Activated CD4-positive, alpha-beta memory T cell treated with anti-CD3 and anti-CD28 coated beads for 36 hours (primary cell): ENCODE measurements at regions of chr4 and their contacts with region 1.

Region 1: DNA sequence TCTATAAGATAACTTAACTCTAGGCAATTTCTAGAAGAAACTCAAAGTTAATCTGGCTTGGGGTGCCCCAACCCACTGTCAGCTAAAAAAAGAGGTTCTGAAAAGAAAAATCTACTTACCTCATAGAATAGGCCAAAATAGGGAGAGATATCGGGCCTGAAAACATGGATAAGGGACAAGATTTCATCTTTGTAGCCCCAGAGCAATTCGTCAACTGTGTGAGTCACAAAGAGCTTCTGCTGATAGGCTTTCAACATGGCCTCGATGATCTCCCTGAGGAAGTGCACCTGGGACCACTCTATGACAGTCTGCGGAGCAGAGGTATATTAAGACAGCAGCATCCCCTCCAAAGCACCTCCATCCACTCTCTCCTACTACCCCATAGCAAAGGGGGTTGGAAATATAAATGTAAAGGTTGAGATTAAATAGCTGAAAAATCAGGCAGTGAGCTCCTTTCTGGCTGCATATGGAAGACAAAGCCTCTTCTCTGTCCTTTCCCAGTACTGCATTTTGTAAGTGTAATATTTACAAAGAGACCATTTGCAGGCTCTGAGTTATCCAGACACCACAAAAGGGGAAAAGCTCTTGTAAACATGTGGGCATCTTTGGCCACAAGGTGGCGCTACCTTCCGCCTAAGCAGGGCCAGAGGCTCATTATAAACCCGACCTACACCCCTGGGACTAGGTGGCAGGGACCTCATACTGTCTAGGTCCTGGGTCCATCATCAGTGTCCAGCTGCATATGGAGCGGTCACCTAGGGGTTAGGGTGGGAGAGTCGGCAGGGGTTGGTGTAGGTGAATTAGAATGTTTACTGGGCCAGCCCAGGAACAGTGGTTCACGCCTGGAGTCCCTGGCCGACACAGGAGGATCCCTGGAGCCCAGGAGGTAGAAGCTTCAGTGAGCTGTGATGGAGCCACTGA is 31.5 kb upstream of the NUP54 start:
- DNase-seq: peak; percentile 87
- H3K4me3 Mint-ChIP-seq: no peak overlapping the region
- H3K27ac Mint-ChIP-seq: no peak overlapping the region
- H3K4me1 Mint-ChIP-seq: no peaks in the 10 kb centered on the region
- H3K27me3 Mint-ChIP-seq: no peaks in the 10 kb centered on the region

Region 2: GRCh38 chr4:76148142-76148865 is 31.4 kb before region 1 on chr4 and contains the start of gene NUP54:
- CTCF ChIA-PET with region 1: interaction called, 11 read pairs
- POLR2A ChIA-PET with region 1: no interaction called
- intact Hi-C with region 1: no loop called
- DNase-seq: peak; percentile 98
- H3K4me3 Mint-ChIP-seq: peak within 1 kb of the TSS; percentile 91
- H3K27ac Mint-ChIP-seq: peak within 1 kb of the TSS; percentile 88
- H3K4me1 Mint-ChIP-seq: peaks cover 25% of the 10 kb centered on the region
- H3K27me3 Mint-ChIP-seq: no peaks in the 10 kb centered on the region
- total RNA-seq, gene NUP54: 51.3 to 55.9 TPM

Region 3: DNA sequence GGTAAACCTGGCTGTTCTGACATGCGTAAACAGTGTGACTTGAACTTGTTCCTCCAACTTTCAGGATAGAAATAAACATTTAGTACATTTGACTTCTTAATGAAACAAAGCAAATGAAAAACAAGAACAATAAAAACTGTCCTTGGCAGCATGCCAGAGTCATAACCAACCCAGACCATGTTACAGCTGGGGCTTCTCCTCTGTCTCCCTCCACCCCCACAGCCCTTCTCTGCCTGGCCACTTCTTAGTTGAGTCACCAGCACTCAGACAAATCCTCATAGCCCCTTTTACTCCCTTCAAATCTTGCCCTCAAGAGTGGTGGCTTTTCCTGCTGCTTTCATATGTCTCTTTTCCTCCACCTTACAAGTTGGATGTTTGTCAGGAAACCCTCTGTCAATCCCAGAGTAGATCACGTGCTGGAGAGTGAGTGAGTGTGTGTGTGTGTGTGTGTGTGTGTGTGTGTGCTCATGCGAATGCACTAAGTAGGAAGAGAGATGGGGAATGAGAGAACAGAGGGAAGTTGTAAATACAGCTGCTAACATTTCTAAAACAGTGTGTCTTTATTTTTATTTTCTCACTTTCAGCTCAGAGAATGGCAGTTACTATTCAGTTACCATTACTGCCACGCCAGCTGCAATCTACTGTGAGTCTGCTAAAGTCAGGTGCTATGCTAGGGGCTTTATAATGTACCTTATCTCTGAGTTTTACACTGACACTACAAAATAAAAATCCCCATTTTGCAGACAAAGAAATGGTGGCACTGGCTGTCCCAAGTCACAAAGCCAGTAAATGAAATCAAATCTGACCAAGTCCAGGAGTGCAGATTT is 19.0 kb after region 1 on chr4:
- CTCF ChIA-PET with region 1: interaction called, 16 read pairs
- POLR2A ChIA-PET with region 1: no interaction called
- intact Hi-C with region 1: no loop called
- DNase-seq: peak; percentile 73
- H3K4me3 Mint-ChIP-seq: no peak overlapping the region
- H3K27ac Mint-ChIP-seq: peak overlapping the region; percentile 20
- H3K4me1 Mint-ChIP-seq: peaks cover 44% of the 10 kb centered on the region
- H3K27me3 Mint-ChIP-seq: no peaks in the 10 kb centered on the region

Region 4: DNA sequence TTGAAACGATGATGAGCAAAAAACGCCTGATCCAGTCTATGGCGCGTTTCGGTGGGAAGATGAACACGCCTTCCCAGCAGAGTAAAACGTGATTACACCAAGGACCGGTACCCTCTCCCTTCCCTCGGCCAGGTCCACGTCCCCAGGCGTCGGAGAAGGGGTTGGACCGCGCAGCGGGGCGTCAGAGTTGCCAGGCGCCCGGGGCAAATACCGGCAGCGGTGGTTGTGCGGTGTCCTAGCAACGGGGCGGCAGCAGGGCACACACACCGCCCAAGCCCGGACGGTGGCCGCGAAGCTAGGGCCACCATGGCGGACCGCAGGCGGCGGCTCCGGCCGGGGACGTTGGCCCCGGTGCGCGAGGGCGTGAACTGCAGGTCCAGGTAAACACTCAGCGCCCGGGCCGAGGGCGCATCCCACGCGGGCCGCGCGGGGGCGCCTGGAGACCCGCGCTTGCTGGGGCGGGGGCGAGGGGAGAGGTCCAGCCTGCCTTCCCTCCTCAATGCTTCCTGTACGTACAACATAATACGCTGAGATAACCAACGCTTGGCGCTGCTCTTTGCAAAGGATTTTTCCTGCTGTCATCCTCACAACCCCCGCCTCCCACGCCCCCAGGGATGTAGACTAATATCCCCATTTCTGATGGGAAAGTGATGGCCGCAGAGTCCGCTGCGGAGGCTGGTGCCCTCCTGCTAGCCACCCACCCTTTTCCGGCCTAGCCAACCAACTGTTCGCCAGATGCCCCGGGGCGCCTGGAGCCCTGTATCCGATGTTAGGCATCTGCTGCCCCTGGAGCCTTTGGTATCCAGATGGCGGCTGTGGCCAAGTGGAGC is 72.0 kb after region 1 on chr4 and contains the start of gene FAM47E:
- CTCF ChIA-PET with region 1: interaction called, 5 read pairs
- POLR2A ChIA-PET with region 1: no interaction called
- intact Hi-C with region 1: loop called (anchors 5 kb)
- DNase-seq: peak; percentile 55
- H3K4me3 Mint-ChIP-seq: peak within 1 kb of the TSS; percentile 69
- H3K27ac Mint-ChIP-seq: no peak within 1 kb of the TSS
- H3K4me1 Mint-ChIP-seq: peaks cover 8% of the 10 kb centered on the region
- H3K27me3 Mint-ChIP-seq: peaks cover 53% of the 10 kb centered on the region
- total RNA-seq, gene FAM47E: not detected

Region 5: GRCh38 chr4:76301068-76301774 is 121.6 kb after region 1 on chr4:
- CTCF ChIA-PET with region 1: interaction called, 13 read pairs
- POLR2A ChIA-PET with region 1: no interaction called
- intact Hi-C with region 1: loop called (anchors 2 kb)
- DNase-seq: peak; percentile 66
- H3K4me3 Mint-ChIP-seq: no peak overlapping the region
- H3K27ac Mint-ChIP-seq: no peak overlapping the region
- H3K4me1 Mint-ChIP-seq: peaks cover 35% of the 10 kb centered on the region
- H3K27me3 Mint-ChIP-seq: peaks cover 3% of the 10 kb centered on the region

Region 6: DNA sequence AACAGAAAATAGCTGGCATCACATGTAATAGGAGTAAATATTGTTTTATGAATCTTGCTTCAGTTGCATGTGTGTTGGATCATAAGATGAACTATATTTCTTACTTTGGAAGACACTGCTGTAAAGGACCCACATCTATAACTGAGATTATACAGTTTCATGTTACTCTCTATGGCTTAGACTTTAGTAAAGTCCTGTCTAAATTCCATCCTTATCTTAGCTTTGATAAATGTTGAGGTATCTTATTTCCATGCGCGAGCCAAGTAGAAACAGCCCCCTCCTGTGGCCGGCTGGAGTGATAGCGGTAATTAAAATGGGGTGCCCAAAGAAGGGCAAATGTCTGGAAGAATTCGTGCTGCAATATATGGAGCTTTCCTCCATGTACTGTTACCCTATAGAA is 198.3 kb after region 1 on chr4:
- CTCF ChIA-PET with region 1: interaction called, 274 read pairs
- POLR2A ChIA-PET with region 1: no interaction called
- intact Hi-C with region 1: loop called (anchors 1 kb)
- DNase-seq: peak; percentile 64
- H3K4me3 Mint-ChIP-seq: no peak overlapping the region
- H3K27ac Mint-ChIP-seq: no peak overlapping the region
- H3K4me1 Mint-ChIP-seq: no peaks in the 10 kb centered on the region
- H3K27me3 Mint-ChIP-seq: no peaks in the 10 kb centered on the region